Activated T-helper 2 cell treated with anti-CD3 and anti-CD28 coated beads, Interferon-gamma antibody, Interleukin-2, Interleukin-4, amounts not matched to agents 10 μg/mL and 5 μg/mL and 100 μg/mL, durations not matched to agents 14 hours and 24 hours and 36 hours (primary cell): ENCODE measurements at regions of chr1 and their contacts with region 1.

Region 1: GRCh38 chr1:182084487-182085316 is 23.2 kb upstream of the ZNF648 start:
- DNase-seq: peak; percentile 74
- H3K4me3 Mint-ChIP-seq: no peak overlapping the region
- H3K27ac Mint-ChIP-seq: no peak overlapping the region
- H3K4me1 Mint-ChIP-seq: peaks cover 44% of the 10 kb centered on the region
- H3K27me3 Mint-ChIP-seq: no peaks in the 10 kb centered on the region

Region 2: GRCh38 chr1:181479137-181479745 is 605.5 kb before region 1 on chr1:
- intact Hi-C with region 1: loop called (anchors 10 kb)
- DNase-seq: no peak
- H3K4me3 Mint-ChIP-seq: no peak overlapping the region
- H3K27ac Mint-ChIP-seq: no peak overlapping the region
- H3K4me1 Mint-ChIP-seq: peaks cover 7% of the 10 kb centered on the region
- H3K27me3 Mint-ChIP-seq: peaks cover 47% of the 10 kb centered on the region

Region 3: DNA sequence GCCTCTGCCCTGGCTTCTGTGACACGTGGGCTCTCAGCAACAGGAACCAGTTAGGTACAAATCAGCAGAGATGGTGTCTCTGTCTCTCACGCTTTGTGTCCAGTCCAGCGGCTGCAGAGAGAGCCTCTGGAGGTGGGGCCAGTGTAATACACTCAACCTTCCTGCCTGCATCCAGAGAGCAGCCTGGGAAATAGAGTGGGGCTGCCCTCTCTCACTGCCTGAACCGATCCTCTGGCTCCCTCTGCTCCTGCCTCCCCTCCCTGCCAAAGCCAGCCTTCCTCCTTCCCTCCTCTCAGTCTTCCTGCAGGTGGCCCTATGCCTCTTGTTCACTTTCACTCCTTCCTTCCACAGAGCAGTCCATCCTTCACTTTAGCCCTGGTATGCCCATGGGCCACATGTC is 23.1 kb before region 1 on chr1 and contains the start of gene ZNF648:
- intact Hi-C with region 1: no loop called
- DNase-seq: no peak
- H3K4me3 Mint-ChIP-seq: no peak within 1 kb of the TSS
- H3K27ac Mint-ChIP-seq: no peak within 1 kb of the TSS
- H3K4me1 Mint-ChIP-seq: peaks cover 7% of the 10 kb centered on the region
- H3K27me3 Mint-ChIP-seq: peaks cover 40% of the 10 kb centered on the region
- total RNA-seq, gene ZNF648: not detected in 2 replicates

Region 4: GRCh38 chr1:182071924-182072323 is 12.8 kb before region 1 on chr1:
- intact Hi-C with region 1: no loop called
- DNase-seq: no peak
- H3K4me3 Mint-ChIP-seq: no peak overlapping the region
- H3K27ac Mint-ChIP-seq: no peak overlapping the region
- H3K4me1 Mint-ChIP-seq: peaks cover 2% of the 10 kb centered on the region
- H3K27me3 Mint-ChIP-seq: peaks cover 12% of the 10 kb centered on the region

Region 5: DNA sequence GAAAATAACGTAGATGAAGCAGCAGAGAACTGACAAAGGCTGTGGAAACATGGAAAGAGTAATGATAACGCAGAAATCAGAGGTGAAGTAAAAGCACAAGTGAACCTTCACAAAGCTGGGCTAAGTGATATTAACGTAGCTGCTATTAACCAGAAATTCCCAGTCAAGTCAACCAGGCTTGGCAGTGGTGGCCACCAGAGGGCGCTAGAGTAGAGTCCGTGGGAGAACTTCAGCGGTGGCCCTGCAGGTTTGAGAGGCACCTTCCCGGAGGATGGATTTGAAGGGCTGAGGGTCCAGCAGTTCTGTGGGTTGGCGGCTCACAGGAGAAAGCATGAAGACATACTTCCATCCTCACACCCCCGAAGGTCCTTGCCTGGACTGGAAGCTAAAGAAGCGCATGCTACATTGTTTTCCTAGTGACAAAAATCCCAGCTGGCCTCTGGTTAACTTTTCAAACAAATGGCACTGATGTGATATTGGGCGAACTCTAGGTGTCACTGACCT is 58.5 kb after region 1 on chr1:
- intact Hi-C with region 1: loop called (anchors 1 kb)
- DNase-seq: peak; percentile 71
- H3K4me3 Mint-ChIP-seq: no peak overlapping the region
- H3K27ac Mint-ChIP-seq: no peak overlapping the region
- H3K4me1 Mint-ChIP-seq: peaks cover 12% of the 10 kb centered on the region
- H3K27me3 Mint-ChIP-seq: peaks cover 6% of the 10 kb centered on the region

Region 6: GRCh38 chr1:182391362-182392044 is 306.8 kb after region 1 on chr1 and contains the start of gene GLUL:
- intact Hi-C with region 1: loop called (anchors 1 kb)
- DNase-seq: peak; percentile 67
- H3K4me3 Mint-ChIP-seq: peak within 1 kb of the TSS; percentile 95
- H3K27ac Mint-ChIP-seq: peak within 1 kb of the TSS; percentile 88
- H3K4me1 Mint-ChIP-seq: peaks cover 33% of the 10 kb centered on the region
- H3K27me3 Mint-ChIP-seq: peaks cover 33% of the 10 kb centered on the region
- total RNA-seq, gene GLUL: 34.9 and 41.0 TPM in 2 replicates

Region 7: GRCh38 chr1:182595641-182596240 is 511.0 kb after region 1 on chr1:
- intact Hi-C with region 1: loop called (anchors 5 kb)
- DNase-seq: peak; percentile 35
- H3K4me3 Mint-ChIP-seq: no peak overlapping the region
- H3K27ac Mint-ChIP-seq: no peak overlapping the region
- H3K4me1 Mint-ChIP-seq: peaks cover 8% of the 10 kb centered on the region
- H3K27me3 Mint-ChIP-seq: peaks cover 9% of the 10 kb centered on the region

Region 8: GRCh38 chr1:182707122-182707521 is 622.4 kb after region 1 on chr1:
- intact Hi-C with region 1: loop called (anchors 5 kb)
- DNase-seq: no peak
- H3K4me3 Mint-ChIP-seq: no peak overlapping the region
- H3K27ac Mint-ChIP-seq: no peak overlapping the region
- H3K4me1 Mint-ChIP-seq: peaks cover 28% of the 10 kb centered on the region
- H3K27me3 Mint-ChIP-seq: peaks cover 4% of the 10 kb centered on the region

Region 9: GRCh38 chr1:182789138-182790076 is 704.7 kb after region 1 on chr1 and contains the start of gene NPL:
- intact Hi-C with region 1: loop called (anchors 5 kb)
- DNase-seq: peak; percentile 82
- H3K4me3 Mint-ChIP-seq: peak within 1 kb of the TSS; percentile 86
- H3K27ac Mint-ChIP-seq: no peak within 1 kb of the TSS
- H3K4me1 Mint-ChIP-seq: peaks cover 6% of the 10 kb centered on the region
- H3K27me3 Mint-ChIP-seq: peaks cover 23% of the 10 kb centered on the region
- total RNA-seq, gene NPL: 3.0 and 4.6 TPM in 2 replicates